ENCODE measurements at regions of chr15 and their contacts with region 1.

Region 1: GRCh38 chr15:99442252-99442897 is 123.4 kb upstream of the MEF2A start:
- DNase-seq: peak; percentile 71
- H3K4me3 ChIP-seq: no peak overlapping the region
- H3K27ac ChIP-seq: no peak overlapping the region
- H3K4me1 ChIP-seq: peaks cover 16% of the 10 kb centered on the region
- H3K27me3 ChIP-seq: no peaks in the 10 kb centered on the region
- CTCF ChIP-seq: no peak

Region 2: GRCh38 chr15:99402014-99402729 is 40.2 kb before region 1 on chr15:
- CTCF ChIA-PET with region 1: no interaction called
- dilution Hi-C with region 1: no loop called
- in situ Hi-C with region 1: no loop called
- intact Hi-C with region 1: no loop called
- DNase-seq: no peak
- H3K4me3 ChIP-seq: no peak overlapping the region
- H3K27ac ChIP-seq: no peak overlapping the region
- H3K4me1 ChIP-seq: no peaks in the 10 kb centered on the region
- H3K27me3 ChIP-seq: no peaks in the 10 kb centered on the region
- CTCF ChIP-seq: no peak

Region 3: DNA sequence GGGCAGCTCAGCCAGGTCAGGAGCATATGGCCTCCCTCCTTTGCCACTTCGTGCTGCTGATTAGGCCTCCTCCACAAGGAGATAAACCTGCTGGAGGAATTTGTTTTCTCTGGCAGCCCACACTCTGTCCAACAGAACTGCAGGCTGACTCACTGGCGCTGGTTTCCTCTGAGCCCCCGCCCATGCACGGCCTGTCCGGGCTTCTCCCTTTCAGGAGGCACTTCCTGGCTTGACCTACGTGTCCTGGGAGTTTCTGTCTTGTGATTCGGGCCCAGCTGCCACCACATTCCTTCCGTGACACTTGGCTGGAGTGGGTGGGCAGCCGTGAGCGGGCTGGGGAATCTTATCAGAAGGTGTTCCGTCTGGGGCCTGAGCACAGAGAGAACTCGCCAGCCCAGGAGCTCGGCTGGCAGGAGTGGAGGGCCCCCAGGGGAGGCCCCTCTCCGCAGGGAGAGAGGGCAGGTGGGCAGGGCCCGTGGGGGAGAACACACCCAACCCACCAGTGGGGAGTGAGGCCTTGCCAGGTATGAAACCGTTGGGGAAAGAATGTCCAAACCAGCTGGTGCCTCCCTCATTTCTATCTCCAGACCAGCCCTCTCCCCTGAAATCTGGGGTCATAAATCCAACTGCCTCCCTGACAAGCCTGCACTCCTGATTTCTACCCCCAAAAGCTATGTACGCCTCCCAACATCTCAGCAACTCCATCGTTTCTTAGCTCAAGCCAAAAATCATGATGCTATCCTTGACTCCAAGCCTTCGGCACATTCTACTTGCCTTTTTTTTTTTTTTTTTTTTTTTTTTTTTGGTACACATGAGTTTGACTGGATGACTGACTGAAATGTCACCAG is 12.8 kb after region 1 on chr15:
- CTCF ChIA-PET with region 1: no interaction called
- dilution Hi-C with region 1: no loop called
- in situ Hi-C with region 1: no loop called
- intact Hi-C with region 1: loop called (anchors 1 kb)
- DNase-seq: peak; percentile 99
- H3K4me3 ChIP-seq: no peak overlapping the region
- H3K27ac ChIP-seq: peak overlapping the region; percentile 93
- H3K4me1 ChIP-seq: peaks cover 39% of the 10 kb centered on the region
- H3K27me3 ChIP-seq: no peaks in the 10 kb centered on the region
- CTCF ChIP-seq: no peak

Region 4: GRCh38 chr15:99476413-99477222 is 34.2 kb after region 1 on chr15:
- CTCF ChIA-PET with region 1: no interaction called
- dilution Hi-C with region 1: no loop called
- in situ Hi-C with region 1: no loop called
- intact Hi-C with region 1: loop called (anchors 2 kb)
- DNase-seq: peak; percentile 98
- H3K4me3 ChIP-seq: no peak overlapping the region
- H3K27ac ChIP-seq: peak overlapping the region; percentile 23
- H3K4me1 ChIP-seq: peaks cover 25% of the 10 kb centered on the region
- H3K27me3 ChIP-seq: no peaks in the 10 kb centered on the region
- CTCF ChIP-seq: no peak

Measured in mammary epithelial cell (primary cell).